ENCODE measurements at regions of chr4 and their contacts with region 1.

Region 1: GRCh38 chr4:27666943-27667342 is 806.3 kb downstream of the STIM2 start:
- DNase-seq: no peak
- ATAC-seq: no peak
- H3K4me3 ChIP-seq: no peak overlapping the region
- H3K27ac ChIP-seq: no peak overlapping the region
- H3K4me1 ChIP-seq: no peaks in the 10 kb centered on the region
- H3K27me3 ChIP-seq: no peaks in the 10 kb centered on the region
- CTCF ChIP-seq: peak; percentile 23; the same call in 1 of the 2 replicates

Region 2: DNA sequence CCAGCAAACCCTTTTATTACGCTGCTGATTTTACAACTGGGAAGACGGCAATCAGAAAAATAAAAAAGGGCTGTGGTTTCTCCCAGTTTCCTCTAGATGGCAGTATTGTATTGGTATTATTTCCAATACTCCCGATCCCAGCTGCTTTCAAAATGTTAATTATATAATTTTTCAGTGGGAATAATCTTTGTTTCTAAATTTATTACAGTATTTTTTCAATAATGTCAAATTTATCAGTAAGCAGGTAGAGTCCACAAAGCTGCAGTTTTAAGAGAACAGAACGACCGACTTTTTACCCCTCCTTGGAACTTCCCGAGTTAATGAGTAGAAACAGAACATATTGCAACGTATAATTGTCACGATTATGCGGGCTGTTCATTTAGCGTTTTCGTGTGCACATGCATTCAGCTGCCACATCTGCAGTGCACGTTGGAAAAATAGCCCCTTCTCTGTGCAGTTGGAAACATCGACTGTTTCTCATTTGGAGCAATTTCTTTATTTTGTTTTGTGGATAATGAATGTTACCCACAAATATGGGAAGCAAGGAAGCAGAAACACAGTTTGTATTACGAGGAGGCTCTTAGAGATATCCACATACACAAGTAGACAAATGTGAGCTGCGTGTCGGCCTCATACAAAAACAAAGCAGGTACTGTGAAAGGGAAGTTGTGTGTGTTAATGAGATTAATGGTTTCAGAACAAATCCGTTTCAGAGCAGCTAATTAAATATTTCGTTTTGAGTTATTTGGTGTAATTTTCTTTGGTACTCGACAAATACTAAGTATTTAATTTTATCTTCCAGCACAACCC is 618.3 kb before region 1 on chr4:
- CTCF ChIA-PET with region 1: no interaction called
- POLR2A ChIA-PET with region 1: no interaction called
- in situ Hi-C with region 1: no loop called
- intact Hi-C with region 1: loop called (anchors 10 kb)
- DNase-seq: peak; percentile 5
- ATAC-seq: no peak
- H3K4me3 ChIP-seq: peak overlapping the region in 1 of 2 experiments; percentile 41; a peak in 2 of 4 replicates
- H3K27ac ChIP-seq: no peak overlapping the region
- H3K4me1 ChIP-seq: peaks cover 2% of the 10 kb centered on the region; the same call in 1 of the 2 replicates
- H3K27me3 ChIP-seq: no peaks in the 10 kb centered on the region
- CTCF ChIP-seq: peak; percentile 65; the same call in 1 of the 2 replicates

Region 3: DNA sequence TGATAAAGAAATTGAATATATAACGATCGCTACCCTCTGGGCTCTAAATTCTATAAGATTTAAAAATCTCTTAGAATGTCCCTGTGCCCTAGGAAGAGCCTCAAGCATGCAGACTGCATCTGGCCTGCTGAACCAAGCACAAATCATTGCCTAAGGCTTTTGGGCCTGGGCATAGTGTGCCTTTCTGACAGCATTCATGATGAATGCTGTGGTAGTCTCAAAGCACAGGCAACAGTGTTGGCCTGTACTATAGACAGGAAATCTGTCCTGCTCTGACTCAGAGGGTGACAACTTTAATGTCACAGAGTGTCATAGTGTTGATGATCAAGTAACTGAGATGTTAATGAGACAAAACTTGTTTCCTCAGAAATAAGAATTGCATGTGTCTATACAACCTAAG is 89.0 kb before region 1 on chr4:
- CTCF ChIA-PET with region 1: no interaction called
- POLR2A ChIA-PET with region 1: no interaction called
- in situ Hi-C with region 1: no loop called
- intact Hi-C with region 1: no loop called
- DNase-seq: no peak
- ATAC-seq: no peak
- H3K4me3 ChIP-seq: no peak overlapping the region
- H3K27ac ChIP-seq: no peak overlapping the region
- H3K4me1 ChIP-seq: no peaks in the 10 kb centered on the region
- H3K27me3 ChIP-seq: no peaks in the 10 kb centered on the region
- CTCF ChIP-seq: no peak